T-cell (primary cell): ENCODE measurements at regions of chr10 and their contacts with region 1.

Region 1: DNA sequence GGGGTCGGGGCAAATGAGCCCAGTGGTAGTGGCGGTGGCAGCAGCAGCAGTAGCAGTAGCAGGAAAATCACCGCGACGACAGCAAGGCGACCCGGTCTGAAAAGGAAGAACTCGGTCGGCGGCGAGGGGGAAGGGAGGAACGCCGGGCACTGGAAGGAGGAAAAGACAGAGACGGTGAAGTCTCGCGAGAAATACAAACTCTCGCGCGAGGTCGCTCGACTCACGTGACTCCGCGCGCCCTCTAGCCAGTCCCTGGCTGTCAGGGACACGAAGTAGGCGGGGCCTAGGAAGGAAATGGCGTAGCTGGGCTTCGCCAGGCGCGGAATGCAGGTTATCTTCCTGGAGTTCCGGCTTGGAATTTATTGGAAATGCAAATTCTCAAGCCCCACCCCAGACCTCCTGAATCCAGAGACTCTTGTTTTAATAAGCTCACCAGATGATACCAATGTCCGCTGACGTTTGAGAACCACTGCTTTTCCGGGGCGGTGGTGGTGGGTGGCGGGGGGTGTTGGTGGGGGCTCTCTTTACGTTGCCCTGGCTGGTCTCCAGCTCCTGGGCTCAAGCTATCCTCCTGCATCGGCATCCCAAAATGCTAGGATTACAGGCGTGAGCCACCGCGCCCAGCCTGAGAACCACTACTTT is at the start of gene SMNDC1:
- DNase-seq: peak; percentile 91 to 99 (median 95)
- ATAC-seq: peak; percentile 92 to 94 (median 92)
- H3K4me3 ChIP-seq: peak within 1 kb of the TSS; percentile 64 to 85
- H3K4me3 Mint-ChIP-seq: peak within 1 kb of the TSS; percentile 89 to 96 (median 94)
- H3K27ac ChIP-seq: peak within 1 kb of the TSS; percentile 83
- H3K27ac Mint-ChIP-seq: peak within 1 kb of the TSS; percentile 98 to 100
- H3K4me1 ChIP-seq: peaks cover 18 to 36% of the 10 kb centered on the region in 2 experiments
- H3K4me1 Mint-ChIP-seq: peaks cover 47 to 56% (median 55%) of the 10 kb centered on the region in 3 donors
- H3K27me3 ChIP-seq: no peaks in the 10 kb centered on the region
- H3K27me3 Mint-ChIP-seq: no peaks in the 10 kb centered on the region
- total RNA-seq, gene SMNDC1: 33.5 to 42.2 (median 34.1) TPM

Region 2: DNA sequence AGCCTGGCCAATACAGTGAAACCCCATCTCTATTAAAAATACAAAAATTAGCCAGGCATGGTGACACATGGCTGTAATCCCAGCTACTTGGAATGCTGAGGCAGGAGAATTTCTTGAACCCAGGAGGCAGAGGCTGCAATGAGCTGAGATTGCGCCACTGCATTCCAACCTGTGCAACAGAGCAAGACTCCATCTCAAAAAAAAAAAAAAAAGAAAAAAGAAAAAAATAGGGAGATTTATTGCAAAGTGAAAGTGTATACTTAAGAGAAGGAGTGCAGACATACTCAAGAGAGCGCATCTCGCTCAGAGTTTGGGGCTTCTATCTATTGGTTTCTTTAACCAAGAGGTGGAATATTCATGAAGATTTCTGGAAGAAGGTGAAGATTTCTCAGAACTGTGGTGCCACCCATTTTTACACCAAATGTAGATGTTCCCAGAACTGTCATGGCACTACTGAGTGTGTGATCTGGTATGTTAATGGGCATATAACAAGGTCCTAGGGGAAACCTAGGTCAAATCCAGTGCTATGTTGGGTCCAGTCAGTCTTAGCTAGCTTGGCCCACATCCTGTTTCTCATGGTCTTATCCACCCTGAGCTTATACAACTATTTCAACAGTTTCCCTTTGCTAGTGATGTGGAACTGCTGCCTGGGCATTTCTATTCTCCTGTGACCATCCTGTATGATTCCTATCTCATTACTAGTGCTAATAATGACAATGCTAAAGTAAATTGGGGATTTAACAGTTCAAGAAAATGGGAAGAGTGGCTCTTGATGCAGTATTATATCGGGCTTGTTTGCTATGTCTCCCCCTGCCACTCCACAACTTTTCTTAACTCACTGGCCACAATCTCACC is 1089.8 kb before region 1 on chr10:
- CTCF ChIA-PET with region 1: no interaction called
- POLR2A ChIA-PET with region 1: no interaction called
- DNase-seq: no peak
- ATAC-seq: no peak
- H3K4me3 ChIP-seq: no peak overlapping the region
- H3K4me3 Mint-ChIP-seq: no peak overlapping the region
- H3K27ac ChIP-seq: no peak overlapping the region
- H3K27ac Mint-ChIP-seq: no peak overlapping the region
- H3K4me1 ChIP-seq: no peaks in the 10 kb centered on the region
- H3K4me1 Mint-ChIP-seq: no peaks in the 10 kb centered on the region
- H3K27me3 ChIP-seq: no peaks in the 10 kb centered on the region
- H3K27me3 Mint-ChIP-seq: no peaks in the 10 kb centered on the region

Region 3: GRCh38 chr10:110354322-110354766 is 49.4 kb after region 1 on chr10:
- CTCF ChIA-PET with region 1: interaction called in 1 of 2 experiments, 12 read pairs
- POLR2A ChIA-PET with region 1: interaction called, 4 read pairs
- DNase-seq: peak; percentile 35 to 86 (median 72)
- ATAC-seq: peak; percentile 25 to 69 (median 52)
- H3K4me3 ChIP-seq: no peak overlapping the region
- H3K4me3 Mint-ChIP-seq: peak overlapping the region in 1 of 3 donors; percentile 42
- H3K27ac ChIP-seq: peak overlapping the region; percentile 35
- H3K27ac Mint-ChIP-seq: peak overlapping the region; percentile 69 to 79
- H3K4me1 ChIP-seq: peaks cover 21 to 59% of the 10 kb centered on the region in 2 experiments
- H3K4me1 Mint-ChIP-seq: peaks cover 53 to 58% (median 54%) of the 10 kb centered on the region in 3 donors
- H3K27me3 ChIP-seq: peaks cover 0 to 15% of the 10 kb centered on the region in 2 experiments
- H3K27me3 Mint-ChIP-seq: no peaks in the 10 kb centered on the region

Region 4: GRCh38 chr10:110456523-110457091 is 151.7 kb after region 1 on chr10:
- CTCF ChIA-PET with region 1: no interaction called
- POLR2A ChIA-PET with region 1: interaction called in 1 of 2 experiments, 10 read pairs
- DNase-seq: no peak
- ATAC-seq: no peak
- H3K4me3 ChIP-seq: no peak overlapping the region
- H3K4me3 Mint-ChIP-seq: no peak overlapping the region
- H3K27ac ChIP-seq: no peak overlapping the region
- H3K27ac Mint-ChIP-seq: no peak overlapping the region
- H3K4me1 ChIP-seq: peaks cover 0 to 56% of the 10 kb centered on the region in 2 experiments
- H3K4me1 Mint-ChIP-seq: peaks cover 27 to 60% (median 40%) of the 10 kb centered on the region in 3 donors
- H3K27me3 ChIP-seq: no peaks in the 10 kb centered on the region
- H3K27me3 Mint-ChIP-seq: no peaks in the 10 kb centered on the region

Region 5: GRCh38 chr10:110547139-110547761 is 242.3 kb after region 1 on chr10:
- CTCF ChIA-PET with region 1: interaction called, 33 to 56 read pairs
- POLR2A ChIA-PET with region 1: interaction called, 3 to 4 read pairs
- DNase-seq: peak in 2 of 35 experiments; percentile 31 to 76
- ATAC-seq: peak in 3 of 4 experiments; percentile 57 to 81 (median 67)
- H3K4me3 ChIP-seq: no peak overlapping the region
- H3K4me3 Mint-ChIP-seq: no peak overlapping the region
- H3K27ac ChIP-seq: no peak overlapping the region
- H3K27ac Mint-ChIP-seq: no peak overlapping the region
- H3K4me1 ChIP-seq: no peaks in the 10 kb centered on the region
- H3K4me1 Mint-ChIP-seq: peaks cover 0 to 5% (median 4%) of the 10 kb centered on the region in 3 donors
- H3K27me3 ChIP-seq: no peaks in the 10 kb centered on the region
- H3K27me3 Mint-ChIP-seq: peaks cover 9 to 13% of the 10 kb centered on the region in 2 donors

Region 6: DNA sequence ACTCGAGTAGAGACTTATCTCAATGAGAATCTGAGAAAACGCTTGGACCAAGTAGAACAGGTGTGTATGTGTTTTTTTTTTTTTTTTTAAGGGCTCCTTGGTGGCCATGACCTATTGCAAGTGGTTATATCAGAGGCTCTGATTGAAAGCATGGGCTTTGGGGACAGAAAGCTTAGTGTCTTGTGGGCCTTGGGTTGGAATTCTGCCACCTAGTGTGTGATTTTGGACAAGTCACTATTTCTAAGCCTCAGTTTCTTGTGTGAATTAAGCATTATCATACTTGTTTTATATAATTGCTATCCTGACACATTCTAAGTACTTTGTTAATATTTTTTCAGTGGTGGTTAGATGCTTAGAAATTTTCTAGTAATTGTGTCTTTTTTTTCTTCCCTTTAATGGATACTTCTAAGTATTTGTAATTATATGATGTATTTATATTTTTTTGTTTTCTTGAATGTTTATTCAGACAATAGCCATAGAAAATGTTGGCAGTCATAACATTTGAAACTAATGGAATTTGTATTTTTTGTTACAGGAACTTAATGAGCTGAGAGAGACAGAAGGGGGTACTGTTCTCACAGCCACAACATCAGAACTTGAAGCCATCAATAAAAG is 295.7 kb after region 1 on chr10:
- CTCF ChIA-PET with region 1: interaction called, 4 to 27 read pairs
- POLR2A ChIA-PET with region 1: interaction called in 1 of 2 experiments, 3 read pairs
- DNase-seq: peak in 14 of 35 experiments; percentile 8 to 70 (median 14)
- ATAC-seq: peak in 2 of 4 experiments; percentile 32 to 47
- H3K4me3 ChIP-seq: no peak overlapping the region
- H3K4me3 Mint-ChIP-seq: no peak overlapping the region
- H3K27ac ChIP-seq: no peak overlapping the region
- H3K27ac Mint-ChIP-seq: no peak overlapping the region
- H3K4me1 ChIP-seq: no peaks in the 10 kb centered on the region
- H3K4me1 Mint-ChIP-seq: no peaks in the 10 kb centered on the region
- H3K27me3 ChIP-seq: no peaks in the 10 kb centered on the region
- H3K27me3 Mint-ChIP-seq: no peaks in the 10 kb centered on the region

Region 7: DNA sequence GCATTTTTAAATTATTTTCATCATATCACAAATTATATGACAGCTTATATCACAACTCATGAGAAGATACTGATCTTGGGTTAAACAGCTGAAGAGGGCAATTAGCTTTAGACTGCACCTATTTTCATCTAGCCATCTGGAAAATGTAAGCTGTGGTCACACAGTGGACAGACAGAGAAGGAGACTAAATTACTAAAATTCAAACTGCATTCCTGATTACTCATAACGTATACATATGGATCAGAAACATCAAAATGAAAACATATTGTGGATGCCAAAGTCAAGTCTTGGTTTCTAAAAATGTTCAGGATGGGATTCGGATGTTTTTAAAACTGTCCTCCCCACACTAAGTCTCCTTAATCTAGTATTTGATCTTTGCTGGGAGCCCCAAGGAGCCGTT is 607.5 kb after region 1 on chr10:
- CTCF ChIA-PET with region 1: interaction called in 1 of 2 experiments, 10 read pairs
- POLR2A ChIA-PET with region 1: no interaction called
- DNase-seq: no peak
- ATAC-seq: no peak
- H3K4me3 ChIP-seq: no peak overlapping the region
- H3K4me3 Mint-ChIP-seq: no peak overlapping the region
- H3K27ac ChIP-seq: no peak overlapping the region
- H3K27ac Mint-ChIP-seq: peak overlapping the region in 1 of 2 donors; percentile 9
- H3K4me1 ChIP-seq: no peaks in the 10 kb centered on the region
- H3K4me1 Mint-ChIP-seq: peaks cover 42 to 55% (median 45%) of the 10 kb centered on the region in 3 donors
- H3K27me3 ChIP-seq: no peaks in the 10 kb centered on the region
- H3K27me3 Mint-ChIP-seq: no peaks in the 10 kb centered on the region